ENCODE measurements at regions of chr7 and their contacts with region 1.

Region 1: GRCh38 chr7:20598459-20599309 is 16.8 kb upstream of the ABCB5 start:
- DNase-seq: no peak
- ATAC-seq: peak; percentile 91

Region 2: DNA sequence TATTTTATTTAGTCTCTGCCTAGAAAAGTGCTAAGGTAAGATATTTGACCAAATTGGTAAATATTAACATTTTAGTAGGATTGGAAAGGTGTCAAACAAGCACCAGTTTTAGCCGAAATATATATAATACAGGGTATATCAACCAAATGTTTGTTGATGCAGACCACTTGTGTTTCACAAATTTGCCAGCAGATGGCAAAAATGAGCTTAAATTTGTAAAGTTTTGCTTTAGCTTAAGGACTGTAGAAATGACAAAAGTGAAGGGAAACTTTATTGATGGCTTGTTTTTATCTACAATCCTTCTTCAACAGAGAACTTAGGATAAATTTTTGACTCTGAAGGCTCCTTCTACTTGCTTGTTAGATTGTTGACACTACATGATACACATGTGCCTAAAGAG is 885.0 kb before region 1 on chr7:
- intact Hi-C with region 1: loop called (anchors 10 kb)
- DNase-seq: no peak
- ATAC-seq: no peak

Region 3: DNA sequence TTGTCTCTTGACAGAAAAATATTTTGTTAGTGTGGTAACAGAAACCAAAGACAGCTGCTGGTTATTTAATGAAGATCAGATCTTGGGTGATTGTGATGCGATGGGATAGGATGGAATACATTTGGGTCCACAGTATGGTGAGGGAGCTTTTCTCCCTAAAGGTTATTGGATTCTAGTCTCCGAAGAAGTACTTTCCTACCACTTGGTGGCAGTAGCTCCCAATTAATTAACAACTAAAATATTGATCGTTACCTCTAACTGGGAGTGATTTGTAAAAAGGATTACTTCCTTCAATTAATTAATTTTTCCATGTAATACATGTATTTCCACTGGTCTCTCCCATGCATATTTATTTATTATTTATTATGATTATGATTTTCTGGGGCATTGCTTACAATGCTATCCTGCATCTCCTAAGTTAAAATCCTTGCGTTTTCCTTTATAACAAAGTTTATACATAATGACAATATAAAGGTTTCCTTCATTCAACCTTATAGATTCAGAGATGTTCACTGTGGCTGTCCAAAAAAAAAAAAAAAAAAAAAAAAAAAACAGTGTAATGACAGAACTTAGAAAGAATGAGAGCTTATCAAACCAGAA is 850.8 kb before region 1 on chr7:
- intact Hi-C with region 1: loop called (anchors 5 kb)
- DNase-seq: no peak
- ATAC-seq: no peak

Region 4: GRCh38 chr7:20158684-20159083 is 440.0 kb before region 1 on chr7:
- intact Hi-C with region 1: loop called (anchors 5 kb)
- DNase-seq: no peak
- ATAC-seq: peak; percentile 81

Region 5: GRCh38 chr7:20870977-20871376 is 272.3 kb after region 1 on chr7:
- intact Hi-C with region 1: no loop called
- DNase-seq: no peak
- ATAC-seq: no peak

Measured in Right ventricle myocardium superior (tissue), 1 donor.